ENCODE measurements at regions of chr17 and their contacts with region 1.

Region 1: GRCh38 chr17:58019039-58019438 is 12.0 kb upstream of the SRSF1 start:
- DNase-seq: no peak

Region 2: DNA sequence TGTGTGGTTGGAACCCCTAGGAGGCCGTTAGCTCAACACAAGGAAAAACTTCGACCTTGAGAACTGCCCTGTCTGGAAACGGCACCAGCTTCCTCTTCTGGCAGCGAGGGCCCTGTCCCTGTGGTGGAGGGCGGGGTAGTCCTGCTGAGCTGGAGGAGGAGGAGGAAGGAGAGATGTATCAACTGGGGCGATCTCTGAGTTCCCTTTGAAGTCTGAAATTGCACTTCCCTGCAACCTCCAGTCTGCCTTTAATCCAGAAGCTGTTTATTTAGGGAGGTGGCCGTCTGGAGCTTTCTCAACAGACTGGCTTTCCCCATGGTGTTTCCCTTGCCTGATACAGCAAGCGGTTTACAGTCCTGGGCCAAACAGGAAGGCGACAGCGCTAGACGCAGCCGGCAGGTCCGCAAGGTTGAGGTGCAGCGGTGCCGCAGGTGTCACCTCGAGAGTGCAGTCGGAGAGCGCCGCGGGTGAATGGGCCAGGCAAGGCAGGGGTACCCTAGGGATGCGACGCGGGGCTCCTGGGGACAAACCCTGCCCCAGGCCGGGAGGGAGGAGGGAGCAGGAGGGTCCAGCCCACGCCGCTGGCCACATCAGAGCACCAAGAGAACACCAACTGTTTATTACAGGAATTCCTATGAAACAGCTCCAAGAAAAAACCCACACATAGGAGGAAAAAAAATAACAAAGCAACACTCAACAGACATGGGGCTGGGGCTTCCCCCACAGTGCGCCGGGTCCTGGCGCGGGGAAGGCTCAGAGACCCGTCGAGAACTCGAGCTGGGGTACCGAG is 157.8 kb before region 1 on chr17:
- intact Hi-C with region 1: no loop called
- DNase-seq: peak; percentile 90

Region 3: DNA sequence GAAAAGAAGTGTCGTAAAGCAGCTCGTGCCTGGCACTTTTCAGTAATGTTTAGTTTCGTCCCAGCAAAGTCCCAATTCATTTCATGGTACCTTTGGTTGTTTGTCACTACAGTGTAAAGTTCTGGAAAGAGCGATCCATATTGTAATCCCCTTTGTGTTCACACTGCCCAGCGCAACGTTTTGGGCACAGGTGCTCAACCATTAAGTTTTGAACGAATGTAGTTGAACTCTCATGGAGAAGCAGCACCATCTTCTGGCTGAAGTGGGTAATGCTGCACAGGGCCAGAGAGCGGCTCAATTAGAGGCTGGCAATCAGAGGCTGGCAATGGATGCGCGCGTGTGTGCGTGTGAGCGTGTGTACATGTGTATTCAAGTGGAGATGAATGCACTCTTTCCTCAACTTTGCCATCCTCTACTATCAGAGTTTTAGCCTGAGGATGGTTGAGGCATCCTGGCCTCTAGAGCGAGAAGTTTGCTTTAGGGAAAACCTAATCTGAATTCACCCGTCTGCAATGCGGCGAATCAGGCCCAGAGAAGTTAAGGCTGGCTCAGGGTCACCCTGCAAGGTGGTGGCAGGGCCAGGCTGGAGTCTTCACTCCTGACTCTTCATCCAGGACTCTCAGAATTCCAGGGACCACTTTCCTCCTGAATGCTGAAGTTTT is 94.1 kb after region 1 on chr17:
- intact Hi-C with region 1: loop called in 1 of 2 experiments (anchors 10 kb)
- DNase-seq: peak; percentile 85

Measured in posterior vena cava (tissue), 2 donors.